A549 (cell line): ENCODE measurements at regions of chr17 and their contacts with region 1.

Region 1: GRCh38 chr17:46841561-46842379 is 9.6 kb upstream of the WNT9B start:
- DNase-seq: peak in 1 of 2 experiments; percentile 54
- ATAC-seq: peak; percentile 79 to 87
- H3K4me3 ChIP-seq: peak overlapping the region; percentile 24; the same call in 2 of the 3 replicates
- H3K27ac ChIP-seq: no peak overlapping the region
- H3K4me1 ChIP-seq: 0 out of 3 replicates have a peak, but pooled peaks cover 3% of the 10 kb centered on the region
- CTCF ChIP-seq: peak; percentile 94
- EP300 ChIP-seq: no peak
- POLR2A ChIP-seq: no peak
- RAD21 ChIP-seq: peak; percentile 57 to 78; a peak in 4 of 5 replicates

Region 2: DNA sequence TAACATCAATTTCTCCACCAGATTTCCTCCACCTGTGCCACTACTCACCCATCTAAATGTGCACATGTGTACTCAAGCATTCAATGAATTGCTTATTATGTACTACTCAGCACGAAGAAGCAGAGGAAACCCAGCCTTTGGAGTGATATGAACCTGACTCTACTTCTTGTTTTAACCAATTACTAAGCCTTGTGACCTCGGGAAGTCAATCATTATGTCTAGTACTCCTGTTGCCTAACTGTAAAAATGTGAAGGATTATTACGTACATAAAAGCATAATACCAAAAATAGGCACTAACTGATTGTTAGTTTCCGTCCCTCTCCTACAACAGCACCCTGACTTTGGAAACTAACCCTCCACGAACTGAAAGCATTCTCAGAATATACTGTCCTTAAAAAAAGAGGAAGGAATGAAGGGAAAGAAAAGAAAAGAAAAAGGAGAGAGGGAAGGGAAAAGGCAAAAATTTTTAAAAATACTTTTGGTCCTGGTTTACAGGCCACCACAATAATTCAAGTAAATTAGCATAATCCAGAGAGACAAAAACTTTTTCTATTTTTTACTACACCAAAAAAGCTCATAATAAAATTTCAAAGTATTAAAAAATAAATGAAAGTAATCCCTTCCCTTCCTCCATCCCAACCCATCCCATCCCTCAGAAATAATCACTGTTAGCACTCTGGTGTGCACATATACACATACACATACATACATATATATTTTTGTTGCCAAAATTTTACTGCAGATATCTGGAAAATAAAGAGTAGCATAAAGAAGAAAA is 702.1 kb before region 1 on chr17:
- CTCF ChIA-PET with region 1: no interaction called
- POLR2A ChIA-PET with region 1: no interaction called
- DNase-seq: no peak
- ATAC-seq: no peak
- H3K4me3 ChIP-seq: no peak overlapping the region
- H3K27ac ChIP-seq: no peak overlapping the region
- H3K4me1 ChIP-seq: peaks cover 63% of the 10 kb centered on the region
- CTCF ChIP-seq: no peak
- EP300 ChIP-seq: no peak
- POLR2A ChIP-seq: no peak
- RAD21 ChIP-seq: no peak

Region 3: GRCh38 chr17:46726206-46726605 is 115.6 kb before region 1 on chr17:
- CTCF ChIA-PET with region 1: no interaction called
- POLR2A ChIA-PET with region 1: no interaction called
- DNase-seq: no peak
- ATAC-seq: no peak
- H3K4me3 ChIP-seq: no peak overlapping the region
- H3K27ac ChIP-seq: no peak overlapping the region
- H3K4me1 ChIP-seq: peaks cover 18% of the 10 kb centered on the region; the same call in 2 of the 3 replicates
- CTCF ChIP-seq: no peak
- EP300 ChIP-seq: no peak
- POLR2A ChIP-seq: no peak
- RAD21 ChIP-seq: no peak

Region 4: DNA sequence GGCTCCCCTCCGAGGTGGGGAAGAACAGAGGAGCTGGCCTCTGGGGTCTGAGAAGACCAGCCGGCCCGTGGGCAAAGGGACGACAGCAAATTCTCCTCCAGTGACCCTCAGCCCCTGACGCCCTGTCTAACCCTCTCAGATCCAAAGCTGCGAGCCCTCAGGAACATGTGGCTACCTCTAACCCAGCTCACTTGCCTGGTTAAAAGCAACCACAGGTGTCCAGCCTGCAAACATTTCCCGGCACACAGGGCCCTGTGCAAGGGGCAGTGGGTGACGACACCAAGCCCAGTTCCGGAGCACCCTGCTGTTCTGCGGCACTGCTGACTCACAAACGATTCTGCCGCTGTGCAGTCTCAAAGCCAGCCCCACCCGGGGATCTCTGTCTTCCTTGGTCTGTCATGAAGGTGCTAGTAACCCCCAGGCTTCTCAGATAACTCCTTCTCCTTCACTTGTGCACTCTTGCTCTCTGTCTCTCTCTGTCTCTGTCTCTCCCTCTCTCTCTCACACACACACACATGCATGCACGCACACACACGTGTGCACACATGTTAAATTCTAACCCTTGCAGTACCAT is 46.3 kb before region 1 on chr17:
- CTCF ChIA-PET with region 1: interaction called, 13 read pairs
- POLR2A ChIA-PET with region 1: no interaction called
- DNase-seq: peak; percentile 67 to 94
- ATAC-seq: peak; percentile 89 to 91
- H3K4me3 ChIP-seq: 0 out of 3 replicates have a peak overlapping the region, but pooled peaks have one; percentile 1
- H3K27ac ChIP-seq: peak overlapping the region; percentile 66 to 82
- H3K4me1 ChIP-seq: peaks cover 14% of the 10 kb centered on the region
- CTCF ChIP-seq: no peak
- EP300 ChIP-seq: no peak
- POLR2A ChIP-seq: no peak
- RAD21 ChIP-seq: no peak

Region 5: DNA sequence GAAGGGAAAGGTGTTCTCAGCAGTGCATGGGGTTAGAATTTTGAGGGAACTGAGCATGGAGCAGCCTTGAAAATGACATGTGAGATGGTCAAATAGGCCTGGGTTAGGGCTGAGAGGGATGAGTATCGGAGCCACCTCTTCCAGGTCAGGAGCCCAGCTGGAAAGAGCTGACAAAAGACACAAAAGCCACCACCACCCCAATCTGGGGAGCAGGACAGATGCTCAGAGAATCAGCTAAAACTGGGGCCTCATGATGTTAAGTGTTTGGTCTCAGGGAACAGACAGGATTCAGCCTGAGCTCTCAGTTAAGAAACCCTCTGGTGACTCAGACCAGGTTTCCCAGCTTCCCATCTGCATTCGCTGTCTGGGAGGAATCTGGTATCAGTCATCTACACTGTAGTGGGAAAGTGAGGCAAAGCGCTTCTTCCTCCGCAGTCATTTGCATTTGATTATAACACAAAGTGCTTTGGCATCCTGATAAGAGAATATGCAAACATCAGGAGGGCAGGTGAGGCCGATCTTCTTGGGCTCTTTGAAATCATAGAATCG is 12.2 kb after region 1 on chr17:
- CTCF ChIA-PET with region 1: interaction called, 32 read pairs
- POLR2A ChIA-PET with region 1: no interaction called
- DNase-seq: no peak
- ATAC-seq: no peak
- H3K4me3 ChIP-seq: no peak overlapping the region
- H3K27ac ChIP-seq: no peak overlapping the region
- H3K4me1 ChIP-seq: peaks cover 5% of the 10 kb centered on the region; the same call in 1 of the 3 replicates
- CTCF ChIP-seq: no peak
- EP300 ChIP-seq: no peak
- POLR2A ChIP-seq: no peak
- RAD21 ChIP-seq: no peak

Region 6: DNA sequence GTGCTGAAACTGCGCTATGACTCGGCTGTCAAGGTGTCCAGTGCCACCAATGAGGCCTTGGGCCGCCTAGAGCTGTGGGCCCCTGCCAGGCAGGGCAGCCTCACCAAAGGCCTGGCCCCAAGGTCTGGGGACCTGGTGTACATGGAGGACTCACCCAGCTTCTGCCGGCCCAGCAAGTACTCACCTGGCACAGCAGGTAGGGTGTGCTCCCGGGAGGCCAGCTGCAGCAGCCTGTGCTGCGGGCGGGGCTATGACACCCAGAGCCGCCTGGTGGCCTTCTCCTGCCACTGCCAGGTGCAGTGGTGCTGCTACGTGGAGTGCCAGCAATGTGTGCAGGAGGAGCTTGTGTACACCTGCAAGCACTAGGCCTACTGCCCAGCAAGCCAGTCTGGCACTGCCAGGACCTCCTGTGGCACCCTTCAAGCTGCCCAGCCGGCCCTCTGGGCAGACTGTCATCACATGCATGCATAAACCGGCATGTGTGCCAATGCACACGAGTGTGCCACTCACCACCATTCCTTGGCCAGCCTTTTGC is 34.6 kb after region 1 on chr17:
- CTCF ChIA-PET with region 1: interaction called, 18 read pairs
- POLR2A ChIA-PET with region 1: no interaction called
- DNase-seq: peak in 1 of 2 experiments; percentile 51
- ATAC-seq: peak; percentile 81 to 92
- H3K4me3 ChIP-seq: no peak overlapping the region
- H3K27ac ChIP-seq: no peak overlapping the region
- H3K4me1 ChIP-seq: peaks cover 2% of the 10 kb centered on the region; the same call in 2 of the 3 replicates
- CTCF ChIP-seq: peak; percentile 34
- EP300 ChIP-seq: no peak
- POLR2A ChIP-seq: no peak
- RAD21 ChIP-seq: peak in 1 of 2 experiments; percentile 39; a peak in 2 of 5 replicates

Region 7: GRCh38 chr17:46940621-46941404 is 99.0 kb after region 1 on chr17:
- CTCF ChIA-PET with region 1: interaction called, 54 read pairs
- POLR2A ChIA-PET with region 1: no interaction called
- DNase-seq: peak; percentile 84 to 97
- ATAC-seq: peak; percentile 74 to 85
- H3K4me3 ChIP-seq: no peak overlapping the region
- H3K27ac ChIP-seq: peak overlapping the region in 1 of 2 experiments; percentile 46; a peak in 2 of 6 replicates
- H3K4me1 ChIP-seq: no peaks in the 10 kb centered on the region
- CTCF ChIP-seq: peak; percentile 95
- EP300 ChIP-seq: no peak
- POLR2A ChIP-seq: no peak
- RAD21 ChIP-seq: peak; percentile 85 to 91